Heart right ventricle (tissue), 16 donors: ENCODE measurements at regions of chr6 and their contacts with region 1.

Region 1: DNA sequence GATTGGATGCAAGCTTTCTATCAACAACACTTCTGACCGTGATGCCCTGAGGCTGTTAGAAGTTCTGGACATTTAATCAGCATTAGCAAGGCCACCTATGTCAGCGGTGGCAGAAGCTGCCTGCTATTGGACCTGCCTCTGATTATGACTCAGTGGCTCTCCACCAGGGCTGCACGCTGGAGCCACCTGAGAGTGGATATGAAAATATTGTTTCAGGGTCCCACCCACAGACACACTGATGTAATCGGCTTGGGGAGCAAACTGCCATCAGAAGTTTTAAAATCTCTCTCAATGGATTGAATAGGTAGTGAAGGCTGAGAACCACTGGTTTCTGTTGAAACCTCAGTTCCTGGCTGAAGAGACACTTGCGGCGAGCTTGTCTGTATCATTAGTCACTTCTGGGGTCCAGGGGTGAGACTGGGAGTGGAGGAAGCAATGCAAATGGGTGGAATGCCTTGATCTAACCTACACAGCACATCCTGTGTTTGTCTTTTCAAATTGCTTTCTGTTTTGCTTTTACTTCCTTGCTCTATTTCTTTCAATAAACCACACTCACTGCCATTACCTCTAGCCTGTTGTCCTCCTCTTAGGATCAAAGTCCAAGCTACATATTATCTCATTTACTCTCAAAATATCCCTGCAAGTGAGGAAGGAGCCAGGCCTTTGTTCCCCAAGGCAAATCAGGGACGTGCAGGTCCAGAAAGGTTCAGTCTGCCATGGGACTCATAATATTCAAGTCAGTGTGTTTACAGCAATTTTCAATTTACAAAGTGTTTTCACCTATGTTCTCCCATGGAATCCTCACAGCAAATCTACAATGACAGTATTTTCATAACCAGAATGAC is 4.2 kb downstream of the CLIC5 start:
- DNase-seq: no peak
- ATAC-seq: peak in 6 of 8 donors; percentile 27 to 65 (median 46)
- H3K4me3 ChIP-seq: peak overlapping the region in 9 of 10 donors; percentile 6 to 91 (median 85)
- H3K27ac ChIP-seq: peak overlapping the region; percentile 55 to 99 (median 97)
- H3K4me1 ChIP-seq: peaks cover 3 to 83% (median 56%) of the 10 kb centered on the region in 9 donors
- H3K27me3 ChIP-seq: peaks cover 0 to 28% (median 0%) of the 10 kb centered on the region in 7 donors
- CTCF ChIP-seq: no peak

Region 2: GRCh38 chr6:45783716-45784115 is 227.7 kb before region 1 on chr6:
- intact Hi-C with region 1: no loop called
- DNase-seq: no peak
- ATAC-seq: no peak
- H3K4me3 ChIP-seq: no peak overlapping the region
- H3K27ac ChIP-seq: no peak overlapping the region
- H3K4me1 ChIP-seq: no peaks in the 10 kb centered on the region
- H3K27me3 ChIP-seq: peaks cover 0 to 3% (median 0%) of the 10 kb centered on the region in 7 donors
- CTCF ChIP-seq: no peak

Region 3: GRCh38 chr6:45951321-45952167 is 59.9 kb before region 1 on chr6:
- intact Hi-C with region 1: loop called in 1 of 10 experiments (anchors 5 kb)
- DNase-seq: no peak
- ATAC-seq: peak in 7 of 8 donors; percentile 10 to 55 (median 34)
- H3K4me3 ChIP-seq: peak overlapping the region in 1 of 10 donors; percentile 2
- H3K27ac ChIP-seq: peak overlapping the region in 7 of 10 donors; percentile 29 to 81 (median 50)
- H3K4me1 ChIP-seq: peaks cover 3 to 97% (median 62%) of the 10 kb centered on the region in 9 donors
- H3K27me3 ChIP-seq: no peaks in the 10 kb centered on the region
- CTCF ChIP-seq: no peak

Region 4: DNA sequence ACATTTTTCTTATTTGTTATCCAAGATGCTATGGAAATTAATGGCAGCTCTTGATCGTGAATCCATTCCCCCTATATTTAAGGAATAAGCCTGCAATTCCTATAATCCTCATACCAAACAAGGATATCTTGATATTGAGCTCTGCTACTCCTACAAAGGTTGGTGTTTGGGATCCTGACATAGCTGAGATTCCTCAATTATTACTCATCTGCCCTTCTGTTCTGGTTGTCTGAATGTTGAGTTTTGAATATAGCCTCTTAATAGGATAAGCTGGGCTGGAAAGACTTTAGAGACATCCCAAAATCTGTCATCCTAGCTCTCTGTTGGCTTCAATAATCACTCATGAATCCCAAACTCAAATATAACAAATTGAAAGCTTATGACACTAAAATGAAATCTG is 45.7 kb before region 1 on chr6:
- intact Hi-C with region 1: loop called in 3 of 10 experiments (anchors 5 kb)
- DNase-seq: no peak
- ATAC-seq: no peak
- H3K4me3 ChIP-seq: no peak overlapping the region
- H3K27ac ChIP-seq: peak overlapping the region in 8 of 10 donors; percentile 1 to 94 (median 57)
- H3K4me1 ChIP-seq: peaks cover 13 to 87% (median 70%) of the 10 kb centered on the region in 9 donors
- H3K27me3 ChIP-seq: no peaks in the 10 kb centered on the region
- CTCF ChIP-seq: no peak

Region 5: DNA sequence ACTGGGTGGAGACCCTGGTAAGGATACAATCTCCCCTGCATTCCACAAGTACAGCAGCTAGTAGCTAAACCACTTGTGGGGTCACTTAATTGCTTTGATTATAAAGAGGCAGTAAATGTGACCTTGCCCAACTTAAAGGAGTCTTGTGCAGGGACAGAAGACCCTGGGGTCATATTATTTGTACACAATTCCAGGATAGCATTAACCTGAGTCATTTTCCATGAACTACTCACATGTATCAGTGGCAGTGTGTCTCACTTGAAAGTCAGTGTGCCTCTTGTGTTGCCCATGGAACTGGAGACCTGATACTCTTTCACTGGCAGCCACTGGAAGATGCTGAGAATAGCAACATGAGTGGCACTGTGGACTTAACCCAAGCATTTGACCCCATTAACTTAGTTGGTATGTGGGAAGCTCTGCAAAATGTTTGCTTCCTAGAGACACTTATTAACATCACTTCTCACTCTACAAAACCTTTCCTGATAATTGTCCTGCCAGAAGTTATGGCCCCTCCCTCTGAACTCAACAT is 24.7 kb before region 1 on chr6:
- intact Hi-C with region 1: loop called in 1 of 10 experiments (anchors 2 kb)
- DNase-seq: peak in 1 of 2 donors; percentile 70
- ATAC-seq: peak; percentile 67 to 91 (median 84)
- H3K4me3 ChIP-seq: no peak overlapping the region
- H3K27ac ChIP-seq: peak overlapping the region; percentile 75 to 94 (median 89)
- H3K4me1 ChIP-seq: peaks cover 6 to 99% (median 86%) of the 10 kb centered on the region in 9 donors
- H3K27me3 ChIP-seq: no peaks in the 10 kb centered on the region
- CTCF ChIP-seq: no peak

Region 6: DNA sequence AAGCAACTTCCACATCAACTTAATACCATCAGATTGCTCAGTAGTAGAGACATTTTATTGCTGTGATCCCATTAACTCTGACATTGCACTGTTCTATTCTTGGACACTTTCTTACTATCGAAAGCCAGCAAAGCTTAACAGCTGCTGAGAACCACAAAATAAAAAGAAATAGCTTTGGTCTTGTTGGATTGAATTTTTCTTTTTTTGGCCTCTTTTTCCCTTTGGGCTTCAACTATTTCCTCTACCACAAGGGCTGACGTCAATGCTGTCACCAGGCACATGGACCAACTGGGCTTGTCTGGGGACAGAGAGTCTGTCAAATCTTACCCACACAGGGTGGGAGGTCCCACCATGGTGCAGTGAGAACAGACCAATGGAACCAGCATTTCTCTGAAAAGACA is 222.7 kb after region 1 on chr6:
- intact Hi-C with region 1: no loop called
- DNase-seq: peak in 1 of 2 donors; percentile 58
- ATAC-seq: peak; percentile 62 to 90 (median 76)
- H3K4me3 ChIP-seq: no peak overlapping the region
- H3K27ac ChIP-seq: peak overlapping the region; percentile 1 to 78 (median 46)
- H3K4me1 ChIP-seq: peaks cover 0 to 59% (median 30%) of the 10 kb centered on the region in 9 donors
- H3K27me3 ChIP-seq: no peaks in the 10 kb centered on the region
- CTCF ChIP-seq: no peak